ENCODE measurements at regions of chr10 and their contacts with region 1.

Region 1: DNA sequence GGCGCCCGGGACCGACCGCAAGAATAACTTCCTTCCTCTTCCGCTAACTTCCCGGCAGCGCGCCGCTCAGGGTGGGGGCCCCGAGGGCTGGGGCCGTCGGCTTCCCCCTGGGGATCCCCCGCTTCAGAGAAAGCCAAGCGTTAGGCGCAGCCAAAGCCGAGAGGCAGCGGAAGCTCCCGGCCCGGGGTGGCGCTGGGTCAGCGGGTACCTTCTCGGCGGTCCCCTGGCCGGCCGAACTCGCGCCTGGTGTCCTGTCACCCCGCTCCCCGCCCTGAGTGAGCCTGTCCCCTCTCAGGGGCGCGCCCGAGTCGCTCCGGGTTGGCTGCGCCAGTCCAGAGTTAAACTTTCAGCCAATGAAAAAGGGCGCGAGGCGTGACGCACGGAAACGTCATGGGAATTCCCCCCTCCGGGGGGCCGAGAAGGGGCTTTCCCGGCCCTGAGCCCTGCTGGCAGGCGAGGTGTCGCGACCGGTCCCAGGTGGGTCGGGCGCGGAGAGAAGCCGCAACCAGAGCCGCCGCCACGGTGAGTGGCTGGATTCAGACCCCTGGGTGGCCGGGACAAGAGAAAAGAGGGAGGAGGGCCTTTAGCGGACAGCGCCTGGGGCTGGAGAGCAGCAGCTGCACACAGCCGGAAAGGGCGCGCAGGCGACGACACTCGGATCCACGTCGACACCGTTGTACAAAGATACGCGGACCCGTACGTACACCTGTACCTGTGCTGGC is 1.3 kb upstream of the NFKB2 start:
- DNase-seq: peak; percentile 94
- H3K4me3 ChIP-seq: peak overlapping the region; percentile 73
- H3K27ac ChIP-seq: peak overlapping the region; percentile 90
- H3K4me1 ChIP-seq: peaks cover 5% of the 10 kb centered on the region
- H3K27me3 ChIP-seq: no peaks in the 10 kb centered on the region
- CTCF ChIP-seq: 0 out of 2 replicates have a peak, but pooled peaks have one; percentile 6

Region 2: DNA sequence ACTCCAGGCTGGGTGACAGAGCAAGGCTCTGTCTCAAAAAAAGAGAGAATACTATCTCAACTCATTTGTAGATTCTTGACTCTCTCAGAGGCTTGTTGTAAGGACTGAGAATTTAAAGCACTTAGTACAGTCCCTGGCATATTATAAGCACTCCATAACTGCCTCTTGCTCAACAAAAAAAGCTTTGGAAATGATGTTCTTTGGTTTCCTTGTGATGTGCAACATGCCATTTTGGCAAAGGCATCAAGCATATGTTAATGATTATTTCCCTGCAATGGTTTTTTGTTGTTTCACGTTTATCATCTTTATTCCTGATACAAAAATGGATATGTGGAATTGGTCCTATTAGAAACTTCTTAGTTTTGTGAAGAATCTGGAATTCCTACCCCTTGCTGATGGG is 226.4 kb before region 1 on chr10:
- CTCF ChIA-PET with region 1: interaction called, 13 read pairs
- POLR2A ChIA-PET with region 1: no interaction called
- intact Hi-C with region 1: loop called (anchors 5 kb)
- DNase-seq: no peak
- H3K4me3 ChIP-seq: no peak overlapping the region
- H3K27ac ChIP-seq: no peak overlapping the region
- H3K4me1 ChIP-seq: no peaks in the 10 kb centered on the region
- H3K27me3 ChIP-seq: no peaks in the 10 kb centered on the region
- CTCF ChIP-seq: no peak

Region 3: DNA sequence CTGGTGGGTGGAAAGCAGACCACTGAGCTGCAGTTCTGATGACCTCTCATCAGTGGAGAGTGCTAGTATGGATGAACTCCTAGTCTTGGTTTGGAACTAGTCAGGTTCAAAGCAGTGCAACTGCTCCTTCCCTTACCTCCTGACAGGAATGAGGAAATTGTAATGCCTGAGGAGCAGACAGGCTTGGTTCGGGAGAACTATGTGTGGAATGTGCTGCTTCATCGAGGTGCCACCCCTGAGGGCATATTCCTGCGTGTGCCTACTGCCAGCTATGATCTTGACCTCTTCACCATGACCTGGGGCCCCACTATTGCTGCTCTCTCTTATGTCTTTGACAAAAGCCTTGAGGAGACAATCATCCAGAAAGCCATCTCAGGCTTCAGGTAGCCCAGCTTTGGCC is 26.2 kb before region 1 on chr10:
- CTCF ChIA-PET with region 1: no interaction called
- POLR2A ChIA-PET with region 1: no interaction called
- intact Hi-C with region 1: no loop called
- DNase-seq: no peak
- H3K4me3 ChIP-seq: no peak overlapping the region
- H3K27ac ChIP-seq: no peak overlapping the region
- H3K4me1 ChIP-seq: no peaks in the 10 kb centered on the region
- H3K27me3 ChIP-seq: no peaks in the 10 kb centered on the region
- CTCF ChIP-seq: no peak

Region 4: DNA sequence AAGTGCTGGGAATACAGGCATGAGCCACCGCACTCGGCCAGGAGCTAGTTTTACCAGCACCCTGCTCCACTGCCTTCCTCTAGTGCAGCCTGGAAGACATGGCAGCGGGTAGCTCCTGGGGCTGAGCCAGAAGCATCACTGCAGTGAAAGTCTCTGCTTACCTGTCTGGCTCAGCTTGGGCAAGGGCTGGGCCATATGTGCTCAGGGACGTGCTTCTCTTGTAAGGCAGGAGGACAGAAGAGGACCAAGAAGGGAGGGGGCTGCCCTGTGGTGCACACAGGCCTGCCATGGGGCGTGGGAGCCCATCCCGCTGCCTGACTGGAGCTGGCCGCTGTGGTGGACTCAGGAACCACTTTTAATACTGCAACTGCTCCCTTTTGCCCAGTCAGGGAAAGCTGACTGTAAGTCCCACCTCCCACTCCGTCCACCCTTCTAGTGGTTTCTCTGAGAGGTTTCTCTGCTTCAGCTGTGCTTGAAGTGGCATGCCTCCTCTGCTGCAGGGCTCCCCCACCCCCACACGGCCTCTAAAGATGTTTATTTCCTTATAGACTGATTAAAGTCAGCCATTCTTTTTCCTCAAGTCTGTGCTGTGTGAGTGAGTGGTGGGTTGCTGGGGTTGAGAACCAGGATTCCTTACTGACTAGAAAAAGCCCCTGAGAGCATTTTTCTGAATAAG is 82.4 kb after region 1 on chr10:
- CTCF ChIA-PET with region 1: no interaction called
- POLR2A ChIA-PET with region 1: no interaction called
- intact Hi-C with region 1: loop called (anchors 1 kb)
- DNase-seq: no peak
- H3K4me3 ChIP-seq: no peak overlapping the region
- H3K27ac ChIP-seq: no peak overlapping the region
- H3K4me1 ChIP-seq: no peaks in the 10 kb centered on the region
- H3K27me3 ChIP-seq: no peaks in the 10 kb centered on the region
- CTCF ChIP-seq: no peak

Region 5: DNA sequence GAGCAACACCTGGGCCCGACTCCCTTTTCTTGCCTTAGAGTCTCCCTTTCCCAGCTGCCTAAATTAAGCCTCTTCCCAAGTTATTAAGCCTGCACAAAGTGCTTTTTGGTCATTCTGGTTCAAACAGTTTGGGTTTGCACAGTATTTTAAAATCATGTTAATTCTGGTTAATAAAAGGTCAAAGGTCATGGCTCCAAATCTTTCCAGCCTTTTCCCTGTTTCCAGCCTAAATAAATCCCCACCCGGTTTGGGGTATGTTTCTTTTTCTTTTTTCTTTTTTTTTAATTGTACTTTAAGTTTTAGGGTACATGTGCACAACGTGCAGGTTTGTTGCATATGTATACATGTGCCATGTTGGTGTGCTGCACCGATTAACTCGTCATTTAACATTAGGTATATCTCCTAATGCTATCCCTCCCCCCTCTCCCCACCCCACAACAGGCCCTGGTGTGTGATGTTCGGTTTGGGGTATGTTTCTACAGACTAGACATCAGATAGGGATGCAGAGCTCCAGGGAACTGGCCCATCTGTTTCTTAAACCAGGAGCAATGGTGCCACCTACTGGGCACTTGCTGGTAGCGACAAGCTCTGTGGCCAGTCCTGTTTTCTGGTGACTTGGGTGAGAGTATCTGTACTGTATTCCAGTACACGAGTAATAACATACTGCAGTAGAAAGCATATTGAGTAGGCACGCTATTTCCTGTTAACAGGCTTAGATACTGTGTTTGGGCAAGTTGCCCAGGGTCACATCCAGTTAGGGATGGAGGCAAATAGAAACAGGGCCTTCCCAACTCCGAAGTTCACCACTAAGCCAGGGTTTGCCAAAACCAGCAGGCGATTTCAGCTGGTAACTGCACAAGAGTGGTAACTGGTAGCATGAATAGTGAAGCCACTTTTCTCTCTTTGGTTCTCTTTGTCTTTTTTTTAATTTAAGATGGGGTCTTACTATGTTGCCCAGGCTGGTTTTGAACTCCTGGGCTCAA is 189.5 kb after region 1 on chr10:
- CTCF ChIA-PET with region 1: interaction called, 12 read pairs
- POLR2A ChIA-PET with region 1: no interaction called
- intact Hi-C with region 1: loop called (anchors 5 kb)
- DNase-seq: peak; percentile 90
- H3K4me3 ChIP-seq: no peak overlapping the region
- H3K27ac ChIP-seq: no peak overlapping the region
- H3K4me1 ChIP-seq: peaks cover 18% of the 10 kb centered on the region
- H3K27me3 ChIP-seq: no peaks in the 10 kb centered on the region
- CTCF ChIP-seq: peak; percentile 87

Region 6: GRCh38 chr10:102641880-102642735 is 247.9 kb after region 1 on chr10:
- CTCF ChIA-PET with region 1: no interaction called
- POLR2A ChIA-PET with region 1: no interaction called
- intact Hi-C with region 1: loop called (anchors 10 kb)
- DNase-seq: peak; percentile 98
- H3K4me3 ChIP-seq: peak overlapping the region; percentile 96
- H3K27ac ChIP-seq: peak overlapping the region; percentile 88
- H3K4me1 ChIP-seq: peaks cover 9% of the 10 kb centered on the region
- H3K27me3 ChIP-seq: no peaks in the 10 kb centered on the region
- CTCF ChIP-seq: no peak

Measured in A673 (cell line).